Right cardiac atrium (tissue), 5 donors: ENCODE measurements at regions of chr17 and their contacts with region 1.

Region 1: DNA sequence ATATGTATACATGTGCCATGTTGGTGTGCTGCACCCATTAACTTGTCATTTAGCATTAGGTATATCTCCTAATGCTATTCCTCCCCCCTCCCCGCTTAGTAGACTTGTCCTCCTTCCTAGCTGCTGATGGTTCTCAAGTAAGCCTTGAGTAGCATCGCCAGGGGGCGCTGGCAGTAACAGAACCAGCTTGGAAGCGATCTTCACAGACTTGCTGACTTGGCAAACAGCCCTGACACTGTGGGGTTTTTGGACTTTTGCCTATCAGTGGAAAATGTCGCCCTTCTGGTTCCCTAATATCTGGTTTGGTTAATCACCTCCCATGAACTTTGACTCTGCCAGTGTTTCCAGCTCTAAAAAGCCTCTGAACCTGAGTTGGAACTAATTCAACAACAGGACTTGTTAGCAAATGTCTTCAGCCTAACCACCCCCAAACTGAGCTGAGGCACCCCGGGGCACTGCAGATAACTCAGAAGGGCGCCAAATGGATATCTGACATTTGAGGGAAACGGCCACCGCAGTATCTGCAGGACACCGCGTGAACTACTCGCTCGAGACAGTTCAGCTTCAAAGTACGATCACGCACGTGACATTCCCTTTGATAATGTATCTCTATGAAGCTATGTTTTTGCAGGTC is 15.4 kb upstream of the SPATA32 start:
- DNase-seq: peak; percentile 96 to 99 (median 96)
- ATAC-seq: peak; percentile 75 to 77
- H3K4me3 ChIP-seq: no peak overlapping the region
- H3K27ac ChIP-seq: peak overlapping the region; percentile 90
- H3K4me1 ChIP-seq: peaks cover 6% of the 10 kb centered on the region
- H3K27me3 ChIP-seq: no peaks in the 10 kb centered on the region

Region 2: GRCh38 chr17:45228763-45229539 is 48.4 kb before region 1 on chr17:
- intact Hi-C with region 1: loop called in 1 of 4 experiments (anchors 10 kb)
- DNase-seq: peak; percentile 93 to 95 (median 94)
- ATAC-seq: peak; percentile 76 to 78
- H3K4me3 ChIP-seq: no peak overlapping the region
- H3K27ac ChIP-seq: peak overlapping the region; percentile 65
- H3K4me1 ChIP-seq: peaks cover 7% of the 10 kb centered on the region
- H3K27me3 ChIP-seq: no peaks in the 10 kb centered on the region

Region 3: GRCh38 chr17:45311760-45312476 is 34.6 kb after region 1 on chr17:
- intact Hi-C with region 1: loop called in 2 of 4 experiments (anchors 5 kb)
- DNase-seq: peak; percentile 56 to 85 (median 74)
- ATAC-seq: peak; percentile 3 to 33
- H3K4me3 ChIP-seq: no peak overlapping the region
- H3K27ac ChIP-seq: peak overlapping the region; percentile 88
- H3K4me1 ChIP-seq: peaks cover 45% of the 10 kb centered on the region
- H3K27me3 ChIP-seq: no peaks in the 10 kb centered on the region

Region 4: GRCh38 chr17:45317112-45317928 is 40.0 kb after region 1 on chr17:
- intact Hi-C with region 1: loop called in 2 of 4 experiments (anchors 5 kb)
- DNase-seq: peak; percentile 100
- ATAC-seq: peak; percentile 94 to 95
- H3K4me3 ChIP-seq: peak overlapping the region; percentile 21
- H3K27ac ChIP-seq: peak overlapping the region; percentile 25
- H3K4me1 ChIP-seq: peaks cover 15% of the 10 kb centered on the region
- H3K27me3 ChIP-seq: no peaks in the 10 kb centered on the region

Region 5: GRCh38 chr17:45371414-45372327 is 94.3 kb after region 1 on chr17:
- intact Hi-C with region 1: loop called in 1 of 4 experiments (anchors 5 kb)
- DNase-seq: peak; percentile 87 to 93 (median 90)
- ATAC-seq: peak; percentile 96
- H3K4me3 ChIP-seq: no peak overlapping the region
- H3K27ac ChIP-seq: peak overlapping the region; percentile 95
- H3K4me1 ChIP-seq: peaks cover 3% of the 10 kb centered on the region
- H3K27me3 ChIP-seq: no peaks in the 10 kb centered on the region

Region 6: GRCh38 chr17:45385331-45385997 is 108.1 kb after region 1 on chr17:
- intact Hi-C with region 1: loop called in 3 of 4 experiments (anchors 1 to 5 kb)
- DNase-seq: peak; percentile 90 to 96 (median 95)
- ATAC-seq: peak; percentile 91 to 94
- H3K4me3 ChIP-seq: no peak overlapping the region
- H3K27ac ChIP-seq: no peak overlapping the region
- H3K4me1 ChIP-seq: peaks cover 1% of the 10 kb centered on the region
- H3K27me3 ChIP-seq: no peaks in the 10 kb centered on the region